CD4-positive, alpha-beta memory T cell (primary cell): ENCODE measurements at regions of chr13 and their contacts with region 1.

Region 1: GRCh38 chr13:48532506-48533499 is at the start of gene RCBTB2:
- DNase-seq: peak; percentile 97 to 99 (median 98)
- H3K4me3 ChIP-seq: peak within 1 kb of the TSS; percentile 70 to 75
- H3K4me3 Mint-ChIP-seq: peak within 1 kb of the TSS; percentile 92 to 98 (median 94)
- H3K27ac ChIP-seq: peak within 1 kb of the TSS; percentile 92
- H3K27ac Mint-ChIP-seq: peak within 1 kb of the TSS; percentile 97 to 99 (median 99)
- H3K4me1 ChIP-seq: peaks cover 46% of the 10 kb centered on the region
- H3K4me1 Mint-ChIP-seq: peaks cover 20 to 55% (median 36%) of the 10 kb centered on the region in 4 donors
- H3K27me3 ChIP-seq: no peaks in the 10 kb centered on the region
- H3K27me3 Mint-ChIP-seq: no peaks in the 10 kb centered on the region
- total RNA-seq, gene RCBTB2: 23.9 to 25.7 TPM

Region 2: DNA sequence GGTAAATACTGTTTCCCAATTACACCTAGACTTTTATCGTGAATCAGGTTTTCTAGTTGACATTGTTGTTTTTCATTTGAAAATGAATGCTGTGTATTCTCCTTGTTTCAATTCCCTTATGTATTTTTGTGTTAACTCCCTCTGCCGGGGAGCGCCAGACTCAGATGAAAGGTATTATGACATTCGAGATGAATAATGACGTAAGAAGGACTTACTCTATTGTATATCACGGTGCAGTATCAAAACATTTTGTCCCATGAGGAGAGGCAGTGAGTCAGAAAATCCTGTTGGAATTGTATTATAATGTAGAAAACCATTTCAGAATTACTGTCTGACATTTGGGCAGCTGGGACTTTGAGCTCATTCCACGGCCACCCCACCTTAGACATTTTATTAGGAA is 1918.2 kb before region 1 on chr13:
- CTCF ChIA-PET with region 1: no interaction called
- POLR2A ChIA-PET with region 1: no interaction called
- intact Hi-C with region 1: no loop called
- DNase-seq: no peak
- H3K4me3 ChIP-seq: no peak overlapping the region
- H3K4me3 Mint-ChIP-seq: no peak overlapping the region
- H3K27ac ChIP-seq: no peak overlapping the region
- H3K27ac Mint-ChIP-seq: peak overlapping the region in 1 of 7 donors; percentile 5
- H3K4me1 ChIP-seq: peaks cover 4% of the 10 kb centered on the region
- H3K4me1 Mint-ChIP-seq: peaks cover 24 to 59% (median 38%) of the 10 kb centered on the region in 4 donors
- H3K27me3 ChIP-seq: no peaks in the 10 kb centered on the region
- H3K27me3 Mint-ChIP-seq: no peaks in the 10 kb centered on the region

Region 3: DNA sequence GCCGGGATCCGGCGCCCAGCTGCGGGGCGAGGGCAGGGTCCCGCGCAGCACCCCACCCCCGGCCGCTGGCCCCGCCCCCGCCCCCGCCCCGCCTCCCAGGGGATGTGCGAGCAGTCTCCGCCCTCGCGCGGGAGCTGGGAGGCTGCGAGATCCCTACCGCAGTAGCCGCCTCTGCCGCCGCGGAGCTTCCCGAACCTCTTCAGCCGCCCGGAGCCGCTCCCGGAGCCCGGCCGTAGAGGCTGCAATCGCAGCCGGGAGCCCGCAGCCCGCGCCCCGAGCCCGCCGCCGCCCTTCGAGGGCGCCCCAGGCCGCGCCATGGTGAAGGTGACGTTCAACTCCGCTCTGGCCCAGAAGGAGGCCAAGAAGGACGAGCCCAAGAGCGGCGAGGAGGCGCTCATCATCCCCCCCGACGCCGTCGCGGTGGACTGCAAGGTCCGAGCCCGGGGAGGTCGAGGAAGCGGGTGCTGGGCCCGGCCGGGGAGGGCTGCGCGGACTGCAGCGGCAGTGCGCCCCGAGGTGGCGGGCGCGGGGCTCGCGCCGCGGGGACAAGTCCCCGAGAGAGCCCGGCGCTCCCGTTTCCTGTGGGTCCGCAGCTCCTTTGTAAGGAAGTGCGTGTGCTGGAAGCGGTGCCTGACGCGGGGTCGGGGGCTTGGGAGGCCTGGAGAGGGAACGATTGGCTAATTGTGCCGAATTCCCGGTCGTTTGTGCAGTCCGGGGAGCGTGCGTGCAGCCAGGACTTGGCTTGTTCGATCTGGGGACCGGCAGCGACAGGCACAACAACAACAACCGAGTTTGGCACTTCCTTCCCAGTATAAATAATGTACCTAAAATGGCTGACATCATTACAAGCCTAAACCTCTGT is 299.5 kb before region 1 on chr13 and contains the start of gene ITM2B:
- CTCF ChIA-PET with region 1: no interaction called
- POLR2A ChIA-PET with region 1: interaction called, 3 read pairs
- intact Hi-C with region 1: loop called (anchors 2 kb)
- DNase-seq: peak; percentile 72 to 79 (median 76)
- H3K4me3 ChIP-seq: peak within 1 kb of the TSS; percentile 68 to 92
- H3K4me3 Mint-ChIP-seq: peak within 1 kb of the TSS; percentile 95 to 99 (median 98)
- H3K27ac ChIP-seq: peak within 1 kb of the TSS; percentile 98
- H3K27ac Mint-ChIP-seq: peak within 1 kb of the TSS; percentile 93 to 99 (median 98)
- H3K4me1 ChIP-seq: peaks cover 45% of the 10 kb centered on the region
- H3K4me1 Mint-ChIP-seq: peaks cover 37 to 69% (median 46%) of the 10 kb centered on the region in 4 donors
- H3K27me3 ChIP-seq: no peaks in the 10 kb centered on the region
- H3K27me3 Mint-ChIP-seq: no peaks in the 10 kb centered on the region
- total RNA-seq, gene ITM2B: 653 to 670 TPM

Region 4: DNA sequence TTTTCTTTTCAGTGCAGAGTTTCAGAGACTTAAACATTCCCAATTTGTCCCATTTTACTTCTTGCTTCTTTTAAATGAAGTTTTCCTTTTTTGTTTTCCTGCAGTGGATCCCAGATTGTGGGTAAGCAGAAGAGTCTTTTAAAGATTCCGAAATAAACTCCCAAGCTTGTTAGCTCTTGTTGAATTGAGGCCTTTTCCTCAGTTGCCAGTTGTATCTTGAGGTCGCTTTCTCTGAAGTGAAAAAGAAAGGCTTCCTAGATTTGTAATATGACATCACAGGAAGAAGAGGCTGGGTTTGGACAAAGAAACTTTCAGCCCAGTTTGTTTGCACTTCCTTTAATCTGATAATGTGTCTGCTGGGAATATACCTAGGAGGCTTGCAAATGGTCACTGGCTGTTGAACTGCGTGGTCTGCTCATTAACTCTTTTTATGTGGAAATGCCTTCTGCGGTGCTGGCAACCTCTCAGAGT is 119.9 kb before region 1 on chr13 and contains the start of gene LPAR6:
- CTCF ChIA-PET with region 1: interaction called, 4 read pairs
- POLR2A ChIA-PET with region 1: interaction called, 53 read pairs
- intact Hi-C with region 1: loop called (anchors 1 kb)
- DNase-seq: peak; percentile 45 to 59 (median 47)
- H3K4me3 ChIP-seq: peak within 1 kb of the TSS; percentile 67 to 90
- H3K4me3 Mint-ChIP-seq: peak within 1 kb of the TSS; percentile 89 to 100 (median 98)
- H3K27ac ChIP-seq: peak within 1 kb of the TSS; percentile 84
- H3K27ac Mint-ChIP-seq: peak within 1 kb of the TSS; percentile 94 to 99 (median 98)
- H3K4me1 ChIP-seq: peaks cover 50% of the 10 kb centered on the region
- H3K4me1 Mint-ChIP-seq: peaks cover 18 to 50% (median 36%) of the 10 kb centered on the region in 4 donors
- H3K27me3 ChIP-seq: no peaks in the 10 kb centered on the region
- H3K27me3 Mint-ChIP-seq: no peaks in the 10 kb centered on the region
- total RNA-seq, gene LPAR6: 89.0 to 91.1 TPM

Region 5: DNA sequence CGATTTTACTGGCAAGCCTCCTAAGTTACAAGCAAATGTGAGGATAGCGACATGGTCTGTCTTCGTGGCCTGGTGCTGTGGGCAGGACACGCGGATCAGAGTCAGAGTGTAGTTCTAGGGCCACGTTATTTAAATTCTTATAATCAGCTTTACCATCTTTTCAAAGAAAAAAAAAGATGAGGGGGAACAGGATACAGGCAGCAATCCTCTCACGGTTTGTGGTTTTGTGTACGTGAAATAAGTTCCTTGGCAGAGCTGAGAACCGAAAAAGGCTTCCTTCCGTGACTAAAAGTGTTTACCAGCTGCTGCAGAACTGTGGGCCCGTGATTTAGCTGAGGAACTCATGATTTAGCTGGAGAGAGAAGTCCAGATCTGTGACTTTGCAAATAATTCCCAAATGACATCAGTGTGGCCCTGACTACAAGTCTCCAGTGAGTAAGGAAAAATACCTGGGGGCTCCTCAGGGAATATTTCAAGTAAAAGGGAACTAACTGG is 27.2 kb before region 1 on chr13:
- CTCF ChIA-PET with region 1: interaction called, 5 read pairs
- POLR2A ChIA-PET with region 1: interaction called, 122 read pairs
- intact Hi-C with region 1: loop called (anchors 1 kb)
- DNase-seq: peak; percentile 79 to 87 (median 84)
- H3K4me3 ChIP-seq: peak overlapping the region in 1 of 2 donors; percentile 32
- H3K4me3 Mint-ChIP-seq: peak overlapping the region; percentile 58 to 85 (median 73)
- H3K27ac ChIP-seq: peak overlapping the region; percentile 60
- H3K27ac Mint-ChIP-seq: peak overlapping the region; percentile 85 to 98 (median 97)
- H3K4me1 ChIP-seq: peaks cover 60% of the 10 kb centered on the region
- H3K4me1 Mint-ChIP-seq: peaks cover 40 to 80% (median 62%) of the 10 kb centered on the region in 4 donors
- H3K27me3 ChIP-seq: no peaks in the 10 kb centered on the region
- H3K27me3 Mint-ChIP-seq: no peaks in the 10 kb centered on the region

Region 6: GRCh38 chr13:48571126-48571913 is 38.5 kb after region 1 on chr13:
- CTCF ChIA-PET with region 1: interaction called, 3 read pairs
- POLR2A ChIA-PET with region 1: interaction called, 35 read pairs
- intact Hi-C with region 1: no loop called
- DNase-seq: no peak
- H3K4me3 ChIP-seq: no peak overlapping the region
- H3K4me3 Mint-ChIP-seq: peak overlapping the region in 5 of 8 donors; percentile 12 to 47 (median 31)
- H3K27ac ChIP-seq: no peak overlapping the region
- H3K27ac Mint-ChIP-seq: peak overlapping the region in 3 of 7 donors; percentile 14 to 66 (median 25)
- H3K4me1 ChIP-seq: peaks cover 43% of the 10 kb centered on the region
- H3K4me1 Mint-ChIP-seq: peaks cover 17 to 54% (median 33%) of the 10 kb centered on the region in 4 donors
- H3K27me3 ChIP-seq: no peaks in the 10 kb centered on the region
- H3K27me3 Mint-ChIP-seq: peaks cover 0 to 2% of the 10 kb centered on the region in 2 donors